ENCODE measurements at regions of chr7 and their contacts with region 1.

Region 1: GRCh38 chr7:81469869-81470723 is 299.8 kb downstream of the HGF start:
- DNase-seq: peak; percentile 77
- H3K4me3 ChIP-seq: no peak overlapping the region
- H3K4me3 Mint-ChIP-seq: no peak overlapping the region
- H3K27ac Mint-ChIP-seq: no peak overlapping the region
- H3K4me1 ChIP-seq: peaks cover 11% of the 10 kb centered on the region
- H3K4me1 Mint-ChIP-seq: peaks cover 26% of the 10 kb centered on the region
- H3K27me3 ChIP-seq: no peaks in the 10 kb centered on the region
- H3K27me3 Mint-ChIP-seq: no peaks in the 10 kb centered on the region
- CTCF ChIP-seq: peak; percentile 77 to 79

Region 2: DNA sequence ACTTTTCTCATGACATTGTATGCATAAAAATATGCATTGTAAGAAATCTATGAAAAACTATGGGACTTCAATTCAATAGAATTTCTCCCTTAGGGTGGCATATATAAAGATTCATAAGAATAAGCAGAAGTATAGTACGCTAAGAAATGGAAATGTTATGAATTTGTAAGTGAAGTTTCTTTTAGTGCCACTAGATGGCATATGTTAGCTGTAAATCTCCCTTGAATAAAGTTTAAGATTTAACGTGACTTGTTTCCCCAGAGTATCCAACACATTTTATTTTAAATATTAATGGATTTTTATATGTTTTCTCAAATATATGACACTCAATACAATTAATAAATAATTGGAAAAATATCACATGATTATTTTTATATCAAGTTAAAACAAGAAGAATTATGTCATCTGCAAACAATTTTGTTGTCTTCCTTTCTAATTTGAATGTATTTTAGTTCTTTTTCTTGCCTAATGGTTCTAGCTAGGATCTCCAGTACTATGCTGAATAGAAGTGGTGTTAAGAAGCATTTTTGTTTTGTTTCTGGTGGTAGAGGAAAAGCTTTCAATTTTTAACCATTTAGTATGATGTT is 12.6 kb after region 1 on chr7:
- CTCF ChIA-PET with region 1: interaction called, 10 read pairs
- POLR2A ChIA-PET with region 1: no interaction called
- intact Hi-C with region 1: no loop called
- DNase-seq: no peak
- H3K4me3 ChIP-seq: no peak overlapping the region
- H3K4me3 Mint-ChIP-seq: no peak overlapping the region
- H3K27ac Mint-ChIP-seq: no peak overlapping the region
- H3K4me1 ChIP-seq: peaks cover 8% of the 10 kb centered on the region
- H3K4me1 Mint-ChIP-seq: no peaks in the 10 kb centered on the region
- H3K27me3 ChIP-seq: no peaks in the 10 kb centered on the region
- H3K27me3 Mint-ChIP-seq: peaks cover 4% of the 10 kb centered on the region
- CTCF ChIP-seq: peak; percentile 40 to 43